ENCODE measurements at regions of chr2 and their contacts with region 1.

Region 1: GRCh38 chr2:33064349-33064801 is 117.6 kb downstream of the LTBP1 start:
- DNase-seq: no peak
- H3K4me3 ChIP-seq: no peak overlapping the region
- H3K27ac ChIP-seq: peak overlapping the region; percentile 56 to 77
- H3K4me1 ChIP-seq: peaks cover 0 to 74% (median 14%) of the 10 kb centered on the region in 4 donors
- H3K27me3 ChIP-seq: no peaks in the 10 kb centered on the region
- CTCF ChIP-seq: no peak

Region 2: GRCh38 chr2:33134086-33134771 is 69.9 kb after region 1 on chr2:
- intact Hi-C with region 1: loop called (anchors 2 kb)
- DNase-seq: peak; percentile 75 to 86
- H3K4me3 ChIP-seq: peak overlapping the region; percentile 56 to 61
- H3K27ac ChIP-seq: peak overlapping the region; percentile 83 to 86
- H3K4me1 ChIP-seq: peaks cover 0 to 76% (median 42%) of the 10 kb centered on the region in 4 donors
- H3K27me3 ChIP-seq: no peaks in the 10 kb centered on the region
- CTCF ChIP-seq: no peak

Region 3: GRCh38 chr2:33859811-33860461 is 795.6 kb after region 1 on chr2:
- intact Hi-C with region 1: no loop called
- DNase-seq: no peak
- H3K4me3 ChIP-seq: no peak overlapping the region
- H3K27ac ChIP-seq: no peak overlapping the region
- H3K4me1 ChIP-seq: no peaks in the 10 kb centered on the region
- H3K27me3 ChIP-seq: no peaks in the 10 kb centered on the region
- CTCF ChIP-seq: no peak

Region 4: DNA sequence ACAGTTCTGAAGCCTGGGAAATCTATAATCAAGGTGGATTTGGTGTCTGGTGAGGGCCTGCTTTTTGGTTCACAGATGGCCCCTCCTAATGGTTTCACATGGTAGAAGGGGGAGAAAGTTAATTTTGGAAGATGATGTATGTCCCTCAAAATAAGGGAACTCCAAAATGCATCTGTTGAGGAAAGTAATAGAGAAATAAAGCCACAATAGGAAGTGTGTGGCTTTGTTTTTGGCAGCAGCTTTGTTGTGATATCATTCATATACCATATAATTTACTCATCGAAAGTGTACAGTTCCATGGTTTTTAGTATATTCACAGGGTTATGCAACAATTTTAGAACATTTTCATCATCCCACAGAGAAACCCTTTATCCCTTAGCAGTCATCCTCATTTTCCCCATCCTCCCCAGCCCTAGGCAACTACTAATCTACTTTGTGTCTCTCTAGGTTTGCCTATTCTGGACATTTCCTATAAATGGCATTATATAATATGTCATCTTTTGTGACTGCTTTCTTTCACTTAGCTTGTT is 808.8 kb after region 1 on chr2:
- intact Hi-C with region 1: no loop called
- DNase-seq: no peak
- H3K4me3 ChIP-seq: no peak overlapping the region
- H3K27ac ChIP-seq: no peak overlapping the region
- H3K4me1 ChIP-seq: peaks cover 0 to 3% (median 0%) of the 10 kb centered on the region in 4 donors
- H3K27me3 ChIP-seq: no peaks in the 10 kb centered on the region
- CTCF ChIP-seq: no peak